ENCODE measurements at regions of chr7 and their contacts with region 1.

Region 1: DNA sequence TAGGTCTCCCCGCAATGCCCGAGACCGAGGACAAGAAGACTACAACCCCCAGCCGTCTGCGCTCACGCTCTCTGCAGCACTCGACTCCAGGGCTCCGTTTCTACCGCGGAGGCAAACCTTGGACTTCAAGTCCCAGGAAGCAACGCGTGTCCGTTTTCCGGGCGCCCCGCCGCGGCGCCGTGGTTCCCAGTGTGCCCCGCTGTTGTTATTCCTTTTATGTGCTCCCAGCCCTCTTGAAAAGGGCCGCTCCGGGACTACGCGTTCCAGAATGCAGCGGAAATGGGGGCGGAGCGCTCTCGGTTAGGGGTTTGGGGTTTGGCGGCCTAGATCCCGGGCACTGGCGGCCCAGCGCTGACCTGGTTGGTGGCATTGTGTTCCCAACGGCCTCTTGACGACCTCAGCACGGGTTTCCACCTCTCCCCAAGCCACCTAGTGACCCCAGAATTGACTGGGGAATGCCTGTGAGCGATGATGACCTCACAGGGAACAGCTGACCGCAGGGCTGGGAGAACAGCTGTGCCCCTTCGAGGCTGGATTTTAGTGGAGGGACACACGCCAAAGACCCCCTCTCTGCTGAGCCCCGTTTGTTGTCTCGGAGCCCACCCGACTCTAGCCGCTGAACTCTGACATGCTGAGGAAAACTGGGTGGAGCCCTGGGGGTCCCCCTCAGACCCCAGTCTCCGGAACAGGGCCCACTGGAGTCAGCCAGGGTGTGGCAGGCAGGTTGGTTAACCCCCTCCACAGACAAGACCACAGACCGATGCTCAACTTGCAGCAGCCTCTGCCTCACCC is 488 bp upstream of the CDK5 start:
- DNase-seq: peak; percentile 99
- ATAC-seq: peak; percentile 93

Region 2: GRCh38 chr7:151017953-151018420 is 40.2 kb before region 1 on chr7:
- intact Hi-C with region 1: no loop called
- DNase-seq: peak; percentile 84
- ATAC-seq: peak; percentile 68

Region 3: DNA sequence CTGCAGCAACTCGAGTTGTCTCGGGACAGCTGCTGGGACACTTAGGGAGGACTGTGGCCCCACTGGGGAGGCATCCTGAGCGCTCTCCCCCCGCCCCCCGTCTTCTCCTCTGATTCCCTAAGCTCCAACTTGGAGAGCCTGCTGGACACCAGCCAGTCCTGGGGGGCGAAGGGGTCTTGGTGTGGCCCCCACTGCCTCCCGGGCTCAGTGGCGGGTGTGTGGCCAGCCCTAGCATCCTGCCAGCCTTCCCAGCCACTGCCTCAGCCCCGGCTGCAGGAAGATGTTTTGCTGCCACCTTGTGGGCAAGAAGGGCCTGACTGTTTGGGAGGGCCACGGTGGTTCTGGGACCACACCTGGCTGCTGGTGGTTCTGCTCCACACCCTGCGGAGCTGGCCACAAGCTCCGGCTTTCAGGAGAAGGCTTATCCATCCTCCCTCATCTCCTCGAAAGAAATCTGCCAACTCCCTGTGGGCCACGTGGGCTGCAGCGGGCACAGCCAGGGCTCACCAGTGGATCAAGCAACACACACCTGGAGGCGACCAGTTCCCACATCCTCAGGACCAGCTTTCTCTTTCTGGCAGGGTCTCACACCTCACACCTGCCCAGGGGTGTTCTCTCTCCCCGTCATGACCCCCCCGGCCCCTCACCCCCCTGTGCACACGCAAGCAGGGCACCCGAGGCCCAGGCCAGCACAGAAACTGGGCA is 52.9 kb after region 1 on chr7:
- intact Hi-C with region 1: loop called (anchors 2 kb)
- DNase-seq: peak; percentile 88
- ATAC-seq: peak; percentile 79

Measured in Right ventricle myocardium inferior (tissue), 1 donor.